Lower leg skin (tissue), 4 donors: ENCODE measurements at regions of chr22 and their contacts with region 1.

Region 1: DNA sequence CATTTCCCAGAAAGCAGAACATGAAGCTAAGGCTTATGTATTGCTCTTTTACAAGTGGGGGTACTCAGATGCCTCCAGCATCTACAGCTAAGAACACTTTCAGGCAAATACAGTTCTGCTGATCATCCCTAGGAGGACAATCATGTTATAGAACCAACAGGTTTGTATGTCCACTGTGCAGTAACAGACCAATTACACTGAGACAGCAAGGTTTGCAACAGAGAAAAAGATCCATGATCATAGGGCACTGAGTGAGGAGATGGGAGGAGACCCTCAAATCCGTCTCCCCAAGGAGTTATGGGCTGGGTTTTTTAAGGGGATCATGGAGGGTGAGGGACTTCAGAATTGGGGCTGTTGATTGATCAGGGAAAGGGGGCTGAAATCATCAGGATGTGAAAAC is 39.1 kb upstream of the GRK3 start:
- DNase-seq: no peak
- H3K4me3 ChIP-seq: no peak overlapping the region
- CTCF ChIP-seq: no peak
- POLR2A ChIP-seq: no peak

Region 2: DNA sequence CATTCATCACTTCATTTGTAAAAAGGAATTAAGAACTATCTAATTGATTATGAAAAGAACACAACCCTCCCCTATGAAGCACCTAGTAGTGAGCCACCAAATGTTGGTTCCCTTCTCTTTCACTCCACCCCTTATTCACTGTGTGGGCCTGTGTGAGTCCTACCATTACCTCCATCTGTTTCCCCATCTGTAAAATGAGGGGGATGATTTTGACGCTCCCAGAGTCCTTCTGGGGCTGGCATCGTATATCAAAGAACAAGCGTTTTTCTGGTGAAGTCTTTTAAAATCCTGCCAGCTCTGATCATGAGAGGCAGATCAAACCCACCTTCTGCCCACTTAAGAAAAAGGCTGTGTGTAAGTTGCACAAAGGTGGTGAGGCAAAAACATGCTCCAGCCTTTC is 547.2 kb after region 1 on chr22:
- intact Hi-C with region 1: loop called (anchors 5 kb)
- DNase-seq: no peak
- H3K4me3 ChIP-seq: no peak overlapping the region
- CTCF ChIP-seq: no peak
- POLR2A ChIP-seq: no peak